ENCODE measurements at regions of chr22 and their contacts with region 1.

Region 1: GRCh38 chr22:50498322-50498890 is 9.1 kb downstream of the LMF2 start:
- DNase-seq: peak; percentile 72
- CTCF ChIP-seq: peak; percentile 75

Region 2: DNA sequence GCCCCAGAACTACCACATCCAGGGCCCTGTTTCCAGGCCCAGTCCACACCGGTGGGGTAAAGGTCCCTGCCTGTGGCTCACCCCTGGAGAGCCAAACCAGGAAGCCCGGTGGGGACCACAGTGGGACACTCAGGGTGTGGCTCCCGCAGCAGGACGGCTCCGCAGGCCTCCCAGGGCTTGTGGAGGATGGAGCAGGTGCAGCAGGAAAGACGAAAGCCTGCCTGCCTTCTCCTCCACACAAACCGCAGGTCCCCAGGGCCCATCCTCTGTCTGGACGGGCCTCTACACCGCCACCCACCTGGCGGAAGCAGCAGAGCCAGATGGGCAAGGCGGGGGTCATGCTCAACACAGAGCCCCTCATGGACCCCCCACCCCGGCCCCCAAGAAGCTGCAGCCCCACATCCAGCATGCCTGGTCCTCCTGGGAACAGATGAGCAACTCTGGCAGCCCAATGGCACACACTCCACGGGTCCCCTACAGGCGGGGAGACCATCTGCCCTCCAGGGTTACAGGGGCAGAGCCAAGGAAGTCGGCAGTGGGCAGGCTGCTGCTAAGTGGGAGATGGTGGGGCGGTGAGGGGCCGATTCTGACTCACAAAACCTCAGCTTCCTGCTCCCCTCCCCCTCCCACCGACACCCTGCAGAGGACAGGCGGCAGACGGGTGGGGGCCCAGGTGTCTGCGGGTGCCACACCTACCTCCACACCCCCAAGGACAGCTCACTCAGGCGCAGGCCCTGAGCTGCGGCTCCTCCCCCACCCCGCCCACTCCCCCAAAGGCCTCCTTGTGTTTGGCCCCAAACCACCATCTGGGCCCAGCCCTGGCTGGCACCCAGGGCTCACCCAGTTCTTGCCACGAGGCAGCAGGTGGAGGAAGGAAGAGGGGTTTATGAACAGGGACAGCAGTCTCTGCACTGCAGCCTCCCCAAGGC is 28.8 kb before region 1 on chr22:
- CTCF ChIA-PET with region 1: interaction called, 12 read pairs
- POLR2A ChIA-PET with region 1: no interaction called
- DNase-seq: peak; percentile 92
- CTCF ChIP-seq: no peak

Region 3: DNA sequence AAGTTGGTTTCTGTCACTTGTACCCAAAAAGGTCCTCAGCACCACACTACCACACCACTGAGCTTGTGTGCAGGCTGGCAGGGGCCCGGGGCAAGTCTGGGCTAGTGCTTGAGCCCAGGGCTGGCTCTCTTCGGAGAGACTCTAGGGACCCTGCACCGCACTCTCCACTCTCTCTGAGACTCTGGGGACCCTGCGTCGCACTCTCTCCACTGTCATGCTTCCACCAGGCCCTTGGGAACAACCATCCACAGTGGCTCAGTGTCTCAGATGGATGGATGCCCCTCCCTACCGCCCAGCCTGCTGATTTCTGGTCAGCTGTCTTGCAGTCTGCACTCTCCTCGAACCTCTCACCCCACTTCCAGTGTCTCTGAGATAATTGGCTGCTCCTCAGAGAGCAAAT is 21.5 kb before region 1 on chr22:
- CTCF ChIA-PET with region 1: interaction called, 10 read pairs
- POLR2A ChIA-PET with region 1: no interaction called
- DNase-seq: no peak
- CTCF ChIP-seq: no peak

Region 4: GRCh38 chr22:50485201-50486131 is 12.9 kb before region 1 on chr22:
- CTCF ChIA-PET with region 1: interaction called, 12 read pairs
- POLR2A ChIA-PET with region 1: no interaction called
- DNase-seq: no peak
- CTCF ChIP-seq: no peak